SK-N-SH (cell line): ENCODE measurements at regions of chr12 and their contacts with region 1.

Region 1: DNA sequence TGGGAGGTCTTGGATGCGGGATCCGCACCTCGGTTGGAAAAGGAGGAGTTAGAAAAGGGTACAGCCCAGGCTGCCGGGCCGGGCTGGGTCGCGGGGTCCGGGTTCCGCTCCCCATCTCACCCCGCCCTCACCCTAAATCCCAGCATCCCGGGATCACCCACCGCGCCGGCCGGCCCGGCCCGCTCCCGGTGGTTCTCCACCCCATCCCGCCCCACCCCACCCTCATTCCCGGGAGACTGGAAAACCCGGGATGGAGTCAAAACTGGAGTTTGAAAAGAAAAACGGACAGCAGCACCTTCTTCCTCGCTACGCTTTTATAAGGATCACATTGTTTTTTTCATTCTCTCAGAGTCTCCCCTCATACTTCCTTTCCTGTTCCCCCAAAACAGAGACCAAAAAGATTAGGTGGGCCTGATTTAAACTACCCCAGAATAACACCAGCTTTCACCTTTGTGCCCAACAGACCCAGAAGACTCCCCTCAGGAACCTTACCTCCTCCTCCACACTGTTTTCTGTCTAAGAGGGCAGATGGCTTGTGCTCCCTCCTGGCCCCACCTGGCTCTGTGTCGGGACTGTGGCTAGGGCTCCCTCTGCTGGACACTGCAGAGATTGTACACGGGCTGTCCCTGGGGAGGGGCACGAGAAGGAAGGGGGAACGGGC is 2.8 kb downstream of the GLI1 start:
- DNase-seq: peak; percentile 95
- H3K4me3 ChIP-seq: peak overlapping the region; percentile 60 to 90
- H3K27ac ChIP-seq: peak overlapping the region; percentile 48 to 61; a peak in 3 of 4 replicates
- H3K4me1 ChIP-seq: peaks cover 0 to 20% of the 10 kb centered on the region in 2 experiments; a peak in 2 of 4 replicates
- H3K27me3 ChIP-seq: peaks cover 13% of the 10 kb centered on the region; the same call in 1 of the 2 replicates
- CTCF ChIP-seq: peak; percentile 98
- EP300 ChIP-seq: no peak
- RAD21 ChIP-seq: peak; percentile 67

Region 2: GRCh38 chr12:57238854-57239554 is 223.4 kb before region 1 on chr12:
- CTCF ChIA-PET with region 1: interaction called, 71 read pairs
- POLR2A ChIA-PET with region 1: no interaction called
- DNase-seq: peak; percentile 98
- H3K4me3 ChIP-seq: peak overlapping the region; percentile 58 to 72
- H3K27ac ChIP-seq: peak overlapping the region in 1 of 2 experiments; percentile 64; a peak in 1 of 4 replicates
- H3K4me1 ChIP-seq: peaks cover 23 to 58% of the 10 kb centered on the region in 2 experiments; a peak in 2 of 4 replicates
- H3K27me3 ChIP-seq: peaks cover 19% of the 10 kb centered on the region; the same call in 1 of the 2 replicates
- CTCF ChIP-seq: peak; percentile 99
- EP300 ChIP-seq: no peak
- RAD21 ChIP-seq: peak; percentile 80

Region 3: DNA sequence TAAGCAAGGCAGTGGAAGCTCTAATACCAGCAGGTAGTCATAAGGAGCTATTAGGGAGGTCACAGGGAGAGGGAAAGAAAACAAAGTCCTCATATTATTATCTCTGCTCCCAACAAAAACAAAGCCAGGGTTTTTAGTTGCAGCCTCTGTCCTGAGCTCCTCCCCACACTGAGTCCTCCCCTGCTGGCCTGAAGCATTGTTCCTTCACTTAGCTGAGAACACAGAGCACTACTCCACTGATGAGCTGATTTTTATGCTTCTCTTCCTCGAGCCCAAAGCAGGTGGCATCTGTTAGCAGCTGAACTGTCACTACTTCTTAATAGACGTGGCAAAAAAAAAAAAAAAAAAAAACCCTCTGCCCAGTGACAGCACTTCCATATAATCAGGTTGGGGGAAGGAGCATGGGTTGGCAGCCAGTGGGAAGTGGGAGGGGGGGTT is 200.9 kb before region 1 on chr12:
- CTCF ChIA-PET with region 1: interaction called, 15 read pairs
- POLR2A ChIA-PET with region 1: no interaction called
- DNase-seq: no peak
- H3K4me3 ChIP-seq: no peak overlapping the region
- H3K27ac ChIP-seq: no peak overlapping the region; a peak in 1 of 4 replicates
- H3K4me1 ChIP-seq: peaks cover 0 to 11% of the 10 kb centered on the region in 2 experiments; a peak in 1 of 4 replicates
- H3K27me3 ChIP-seq: no peaks in the 10 kb centered on the region
- CTCF ChIP-seq: no peak
- EP300 ChIP-seq: no peak
- RAD21 ChIP-seq: no peak

Region 4: DNA sequence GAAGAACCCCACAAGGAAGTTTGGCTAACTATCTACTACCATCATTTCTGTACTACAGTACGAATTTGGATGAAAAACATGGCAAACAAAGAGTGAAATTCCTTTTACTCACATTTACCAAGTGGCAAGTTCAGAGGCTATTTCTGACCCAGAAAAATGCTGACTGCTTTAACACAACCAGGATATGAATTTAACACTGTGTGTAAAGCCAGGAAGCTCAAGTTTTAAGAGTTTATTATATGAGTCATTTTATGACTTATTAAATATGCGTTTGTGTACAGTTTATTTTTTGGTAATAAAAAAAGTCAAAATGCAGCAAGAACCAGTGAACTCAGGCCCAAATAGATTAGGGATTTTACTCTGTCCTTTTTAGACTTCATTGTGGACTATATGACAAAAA is 153.0 kb before region 1 on chr12:
- CTCF ChIA-PET with region 1: interaction called, 391 read pairs
- POLR2A ChIA-PET with region 1: no interaction called
- DNase-seq: no peak
- H3K4me3 ChIP-seq: no peak overlapping the region
- H3K27ac ChIP-seq: peak overlapping the region in 1 of 2 experiments; percentile 52; a peak in 3 of 4 replicates
- H3K4me1 ChIP-seq: peaks cover 0 to 14% of the 10 kb centered on the region in 2 experiments; a peak in 1 of 4 replicates
- H3K27me3 ChIP-seq: no peaks in the 10 kb centered on the region
- CTCF ChIP-seq: no peak
- EP300 ChIP-seq: no peak
- RAD21 ChIP-seq: no peak

Region 5: GRCh38 chr12:57476162-57476992 is 14.0 kb after region 1 on chr12:
- CTCF ChIA-PET with region 1: interaction called, 67 read pairs
- POLR2A ChIA-PET with region 1: interaction called, 3 read pairs
- DNase-seq: no peak
- H3K4me3 ChIP-seq: peak overlapping the region; percentile 33 to 41; a peak in 3 of 4 replicates
- H3K27ac ChIP-seq: no peak overlapping the region
- H3K4me1 ChIP-seq: peaks cover 0 to 10% of the 10 kb centered on the region in 2 experiments; a peak in 3 of 4 replicates
- H3K27me3 ChIP-seq: peaks cover 53% of the 10 kb centered on the region
- CTCF ChIP-seq: peak; percentile 32
- EP300 ChIP-seq: no peak
- RAD21 ChIP-seq: no peak

Region 6: GRCh38 chr12:57487597-57488401 is 25.4 kb after region 1 on chr12 and contains the start of gene MARS1:
- CTCF ChIA-PET with region 1: interaction called, 28 read pairs
- POLR2A ChIA-PET with region 1: interaction called, 5 read pairs
- DNase-seq: peak; percentile 92
- H3K4me3 ChIP-seq: peak within 1 kb of the TSS; percentile 77 to 100
- H3K27ac ChIP-seq: peak within 1 kb of the TSS; percentile 73 to 74
- H3K4me1 ChIP-seq: peaks cover 6 to 9% of the 10 kb centered on the region in 2 experiments; a peak in 3 of 4 replicates
- H3K27me3 ChIP-seq: no peaks in the 10 kb centered on the region
- CTCF ChIP-seq: peak; percentile 32
- EP300 ChIP-seq: no peak
- RAD21 ChIP-seq: no peak
- polyA plus RNA-seq, gene MARS1: 158 and 193 TPM in 2 replicates